Mammary epithelial cell (primary cell): ENCODE measurements at regions of chr2 and their contacts with region 1.

Region 1: GRCh38 chr2:68031542-68032160 is 31.2 kb downstream of the C1D start:
- DNase-seq: peak; percentile 48
- H3K4me3 ChIP-seq: no peak overlapping the region
- H3K27ac ChIP-seq: no peak overlapping the region
- H3K4me1 ChIP-seq: no peaks in the 10 kb centered on the region
- H3K27me3 ChIP-seq: no peaks in the 10 kb centered on the region
- CTCF ChIP-seq: peak; percentile 67 to 70

Region 2: DNA sequence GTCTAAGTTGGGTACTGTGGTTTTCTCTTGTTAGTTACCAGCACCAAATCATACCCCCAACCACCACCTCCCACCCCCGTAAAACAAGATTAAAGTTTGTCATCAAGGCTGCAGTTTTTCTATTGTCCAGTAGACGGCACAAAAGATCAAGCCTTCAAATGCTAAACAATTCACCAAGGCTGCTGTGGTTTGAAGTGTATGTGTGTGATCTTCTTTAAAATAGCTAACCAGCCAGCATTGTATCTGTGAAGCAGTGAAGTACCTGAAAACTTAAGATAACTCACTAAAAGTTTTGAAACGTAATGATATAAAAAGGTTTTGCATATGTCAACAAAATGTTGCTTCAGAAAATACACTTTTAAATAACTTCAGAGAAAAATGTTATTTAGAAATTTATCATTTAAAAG is 1602.6 kb before region 1 on chr2:
- CTCF ChIA-PET with region 1: interaction called, 5 read pairs
- dilution Hi-C with region 1: no loop called
- in situ Hi-C with region 1: loop called in 1 of 2 experiments (anchors 25 kb)
- intact Hi-C with region 1: loop called (anchors 5 kb)
- DNase-seq: peak; percentile 41
- H3K4me3 ChIP-seq: no peak overlapping the region
- H3K27ac ChIP-seq: no peak overlapping the region
- H3K4me1 ChIP-seq: peaks cover 4% of the 10 kb centered on the region
- H3K27me3 ChIP-seq: peaks cover 23% of the 10 kb centered on the region
- CTCF ChIP-seq: peak; percentile 93 to 95

Region 3: GRCh38 chr2:67322353-67323001 is 709.2 kb before region 1 on chr2:
- CTCF ChIA-PET with region 1: no interaction called
- dilution Hi-C with region 1: no loop called
- in situ Hi-C with region 1: no loop called
- intact Hi-C with region 1: loop called (anchors 10 kb)
- DNase-seq: peak; percentile 73
- H3K4me3 ChIP-seq: no peak overlapping the region
- H3K27ac ChIP-seq: no peak overlapping the region
- H3K4me1 ChIP-seq: peaks cover 3% of the 10 kb centered on the region
- H3K27me3 ChIP-seq: no peaks in the 10 kb centered on the region
- CTCF ChIP-seq: peak; percentile 82 to 87

Region 4: DNA sequence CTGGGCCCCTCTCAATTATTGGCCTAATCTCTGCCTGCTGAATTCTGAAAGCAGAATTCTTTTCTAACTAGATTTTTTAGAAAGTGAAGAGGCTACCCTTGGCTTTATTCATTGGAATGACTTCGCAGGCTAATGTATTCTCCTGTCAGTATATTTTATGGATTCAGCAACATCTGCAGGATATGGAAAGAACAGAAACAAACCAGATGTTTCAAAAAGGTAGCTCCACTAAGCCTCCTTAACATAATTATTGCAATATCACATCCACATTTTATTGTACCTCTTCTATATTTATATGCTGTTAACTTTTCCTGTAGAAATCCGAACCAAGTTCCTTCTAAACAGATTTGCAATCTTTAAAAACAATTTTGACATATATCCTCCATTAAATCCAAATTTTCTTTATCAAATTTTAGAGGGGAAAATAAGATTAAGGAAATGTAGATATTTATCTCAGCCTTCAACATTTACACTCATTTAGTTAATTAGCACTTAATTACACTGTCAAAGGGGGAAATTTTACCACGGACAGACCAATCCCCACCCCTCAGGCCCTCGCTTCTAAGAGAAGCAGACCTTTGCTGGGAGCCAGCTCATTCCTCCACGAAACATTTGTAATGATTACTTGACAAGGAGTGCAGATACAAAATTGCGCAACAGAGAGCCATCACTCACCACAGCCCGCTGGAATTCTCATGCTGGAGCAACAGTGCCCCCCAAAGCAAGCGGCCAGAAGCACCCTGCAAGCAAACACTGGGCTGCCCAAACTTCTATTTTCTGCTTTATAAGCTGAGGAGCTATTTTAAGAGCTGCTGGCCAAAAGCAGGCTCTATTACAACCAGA is 381.1 kb before region 1 on chr2:
- CTCF ChIA-PET with region 1: no interaction called
- dilution Hi-C with region 1: no loop called
- in situ Hi-C with region 1: no loop called
- intact Hi-C with region 1: loop called (anchors 5 kb)
- DNase-seq: peak; percentile 67
- H3K4me3 ChIP-seq: no peak overlapping the region
- H3K27ac ChIP-seq: no peak overlapping the region
- H3K4me1 ChIP-seq: peaks cover 8% of the 10 kb centered on the region
- H3K27me3 ChIP-seq: no peaks in the 10 kb centered on the region
- CTCF ChIP-seq: peak; percentile 80 to 91

Region 5: GRCh38 chr2:67840460-67841068 is 191.1 kb before region 1 on chr2:
- CTCF ChIA-PET with region 1: no interaction called
- dilution Hi-C with region 1: no loop called
- in situ Hi-C with region 1: no loop called
- intact Hi-C with region 1: loop called (anchors 1 kb)
- DNase-seq: peak; percentile 56
- H3K4me3 ChIP-seq: no peak overlapping the region
- H3K27ac ChIP-seq: no peak overlapping the region
- H3K4me1 ChIP-seq: no peaks in the 10 kb centered on the region
- H3K27me3 ChIP-seq: no peaks in the 10 kb centered on the region
- CTCF ChIP-seq: peak; percentile 93 to 95

Region 6: GRCh38 chr2:67917332-67918054 is 114.2 kb before region 1 on chr2:
- CTCF ChIA-PET with region 1: no interaction called
- dilution Hi-C with region 1: no loop called
- in situ Hi-C with region 1: no loop called
- intact Hi-C with region 1: loop called (anchors 1 kb)
- DNase-seq: peak; percentile 86
- H3K4me3 ChIP-seq: no peak overlapping the region
- H3K27ac ChIP-seq: peak overlapping the region; percentile 86
- H3K4me1 ChIP-seq: peaks cover 19% of the 10 kb centered on the region
- H3K27me3 ChIP-seq: no peaks in the 10 kb centered on the region
- CTCF ChIP-seq: no peak

Region 7: GRCh38 chr2:68110102-68110501 is 78.5 kb after region 1 on chr2:
- CTCF ChIA-PET with region 1: no interaction called
- dilution Hi-C with region 1: no loop called
- in situ Hi-C with region 1: no loop called
- intact Hi-C with region 1: no loop called
- DNase-seq: no peak
- H3K4me3 ChIP-seq: no peak overlapping the region
- H3K27ac ChIP-seq: no peak overlapping the region
- H3K4me1 ChIP-seq: no peaks in the 10 kb centered on the region
- H3K27me3 ChIP-seq: no peaks in the 10 kb centered on the region
- CTCF ChIP-seq: no peak